ENCODE measurements at regions of chr6 and their contacts with region 1.

Region 1: GRCh38 chr6:39887381-39888070 is 46.7 kb downstream of the MOCS1 start:
- DNase-seq: peak; percentile 83 to 91 (median 88)
- ATAC-seq: peak; percentile 92 to 95 (median 93)
- H3K4me3 ChIP-seq: no peak overlapping the region
- H3K27ac ChIP-seq: peak overlapping the region; percentile 28 to 84 (median 71)
- H3K4me1 ChIP-seq: peaks cover 0 to 49% (median 31%) of the 10 kb centered on the region in 12 donors
- H3K27me3 ChIP-seq: no peaks in the 10 kb centered on the region
- CTCF ChIP-seq: no peak
- POLR2A ChIP-seq: no peak

Region 2: DNA sequence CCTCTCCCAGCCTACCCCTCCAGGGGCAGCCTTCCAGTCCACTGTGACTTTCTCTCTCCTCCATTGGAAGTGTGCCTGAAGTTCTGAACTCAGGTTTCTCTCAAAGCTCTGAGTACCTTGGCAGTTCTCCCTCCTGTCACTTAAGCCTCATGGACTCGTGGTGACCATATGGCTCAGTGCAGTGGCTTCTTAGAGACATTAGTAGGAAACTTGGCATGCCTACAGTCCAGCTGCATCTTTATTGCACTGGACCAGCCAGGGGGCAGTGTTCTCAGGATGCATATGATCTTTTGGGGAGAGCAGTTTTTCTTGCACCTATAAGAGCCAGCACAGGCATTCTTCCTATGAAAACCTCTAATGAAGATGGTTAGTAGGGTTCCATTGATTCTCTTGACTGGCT is 517.5 kb before region 1 on chr6:
- intact Hi-C with region 1: loop called in 5 of 10 experiments (anchors 5 kb)
- DNase-seq: no peak
- ATAC-seq: no peak
- H3K4me3 ChIP-seq: no peak overlapping the region
- H3K27ac ChIP-seq: no peak overlapping the region
- H3K4me1 ChIP-seq: no peaks in the 10 kb centered on the region
- H3K27me3 ChIP-seq: peaks cover 0 to 3% (median 0%) of the 10 kb centered on the region in 9 donors
- CTCF ChIP-seq: peak in 5 of 12 donors; percentile 5 to 30 (median 21)
- POLR2A ChIP-seq: no peak

Region 3: DNA sequence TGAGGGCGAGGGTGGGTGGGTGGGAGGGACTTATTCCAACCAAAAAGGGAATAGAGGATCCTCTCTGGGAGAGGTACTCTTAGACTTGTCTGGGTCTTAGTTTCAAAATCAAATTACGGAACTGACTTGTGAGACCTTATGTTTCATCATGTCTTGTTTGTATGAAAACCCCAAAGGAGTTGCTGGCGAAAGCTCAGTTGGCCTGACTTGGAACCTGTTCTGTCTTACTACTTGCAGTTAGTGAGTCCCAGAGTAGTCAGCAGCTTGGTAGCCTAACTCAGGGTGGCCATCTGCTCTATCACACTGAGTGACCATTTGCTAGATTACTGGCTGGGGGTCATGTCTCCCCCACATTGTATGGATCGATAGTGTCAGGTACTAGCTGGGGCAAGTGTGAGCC is 161.6 kb after region 1 on chr6:
- intact Hi-C with region 1: no loop called
- DNase-seq: no peak
- ATAC-seq: no peak
- H3K4me3 ChIP-seq: no peak overlapping the region
- H3K27ac ChIP-seq: no peak overlapping the region
- H3K4me1 ChIP-seq: no peaks in the 10 kb centered on the region
- H3K27me3 ChIP-seq: peaks cover 0 to 14% (median 0%) of the 10 kb centered on the region in 9 donors
- CTCF ChIP-seq: no peak
- POLR2A ChIP-seq: no peak